Endothelial cell of umbilical vein (primary cell): ENCODE measurements at regions of chr3 and their contacts with region 1.

Region 1: GRCh38 chr3:100893590-100893989 is 99.6 kb downstream of the ABI3BP start:
- DNase-seq: peak; percentile 74
- H3K4me3 ChIP-seq: no peak overlapping the region
- H3K27ac ChIP-seq: no peak overlapping the region
- H3K4me1 ChIP-seq: peaks cover 8% of the 10 kb centered on the region
- H3K27me3 ChIP-seq: no peaks in the 10 kb centered on the region
- CTCF ChIP-seq: peak; percentile 78 to 80
- POLR2A ChIP-seq: no peak

Region 2: GRCh38 chr3:100737334-100737733 is 156.3 kb before region 1 on chr3:
- CTCF ChIA-PET with region 1: interaction called, 4 read pairs
- POLR2A ChIA-PET with region 1: no interaction called
- dilution Hi-C with region 1: no loop called
- intact Hi-C with region 1: loop called (anchors 1 kb)
- DNase-seq: peak; percentile 48
- H3K4me3 ChIP-seq: no peak overlapping the region
- H3K27ac ChIP-seq: no peak overlapping the region
- H3K4me1 ChIP-seq: no peaks in the 10 kb centered on the region
- H3K27me3 ChIP-seq: no peaks in the 10 kb centered on the region
- CTCF ChIP-seq: peak; percentile 19 to 36
- POLR2A ChIP-seq: no peak

Region 3: DNA sequence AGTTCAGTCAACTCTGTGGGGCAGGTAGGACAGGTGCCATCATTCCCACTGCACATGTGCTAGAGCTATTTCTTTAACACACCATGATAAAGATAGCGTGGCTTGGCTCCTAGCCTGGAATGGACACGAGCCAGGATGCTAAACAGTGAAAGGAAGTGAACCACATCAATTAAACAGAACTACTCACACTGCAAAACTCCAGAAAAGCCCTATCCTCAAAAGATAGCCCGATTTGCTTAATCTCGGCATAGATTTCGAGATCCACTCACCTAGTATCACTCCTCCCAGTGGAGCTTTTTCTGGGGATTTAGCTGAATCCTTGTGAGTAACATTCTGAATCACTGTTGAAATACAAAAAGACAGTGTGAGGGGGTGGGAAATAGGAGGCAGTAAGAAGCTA is 18.4 kb before region 1 on chr3:
- CTCF ChIA-PET with region 1: interaction called, 11 read pairs
- POLR2A ChIA-PET with region 1: no interaction called
- dilution Hi-C with region 1: no loop called
- intact Hi-C with region 1: no loop called
- DNase-seq: peak; percentile 94
- H3K4me3 ChIP-seq: no peak overlapping the region
- H3K27ac ChIP-seq: peak overlapping the region; percentile 2
- H3K4me1 ChIP-seq: peaks cover 13% of the 10 kb centered on the region
- H3K27me3 ChIP-seq: no peaks in the 10 kb centered on the region
- CTCF ChIP-seq: no peak
- POLR2A ChIP-seq: no peak

Region 4: DNA sequence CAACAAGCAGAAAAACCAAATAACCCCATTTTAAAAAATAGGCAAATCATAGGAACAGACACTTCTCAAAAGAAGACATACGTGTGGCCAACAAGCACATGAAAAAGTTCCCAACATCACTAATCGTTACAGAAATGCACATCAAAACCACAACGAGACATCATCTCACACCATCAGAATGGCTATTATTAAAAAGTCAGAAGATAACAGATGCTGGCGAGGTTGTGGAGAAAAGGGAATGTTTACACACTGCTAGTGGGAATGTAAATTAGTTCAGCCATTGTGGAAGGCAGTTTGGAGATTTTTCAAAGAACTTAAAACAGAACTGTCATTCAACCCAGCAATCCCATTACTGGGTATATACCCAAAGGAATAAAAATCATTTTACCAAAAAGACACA is 38.9 kb after region 1 on chr3:
- CTCF ChIA-PET with region 1: no interaction called
- POLR2A ChIA-PET with region 1: no interaction called
- dilution Hi-C with region 1: no loop called
- intact Hi-C with region 1: no loop called
- DNase-seq: no peak
- H3K4me3 ChIP-seq: no peak overlapping the region
- H3K27ac ChIP-seq: no peak overlapping the region
- H3K4me1 ChIP-seq: no peaks in the 10 kb centered on the region
- H3K27me3 ChIP-seq: no peaks in the 10 kb centered on the region
- CTCF ChIP-seq: no peak
- POLR2A ChIP-seq: no peak

Region 5: GRCh38 chr3:101069901-101070798 is 176.6 kb after region 1 on chr3:
- CTCF ChIA-PET with region 1: interaction called, 9 read pairs
- POLR2A ChIA-PET with region 1: no interaction called
- dilution Hi-C with region 1: no loop called
- intact Hi-C with region 1: loop called (anchors 1 kb)
- DNase-seq: peak; percentile 46
- H3K4me3 ChIP-seq: no peak overlapping the region
- H3K27ac ChIP-seq: peak overlapping the region; percentile 88
- H3K4me1 ChIP-seq: peaks cover 67% of the 10 kb centered on the region
- H3K27me3 ChIP-seq: no peaks in the 10 kb centered on the region
- CTCF ChIP-seq: peak; percentile 55 to 72
- POLR2A ChIP-seq: no peak

Region 6: DNA sequence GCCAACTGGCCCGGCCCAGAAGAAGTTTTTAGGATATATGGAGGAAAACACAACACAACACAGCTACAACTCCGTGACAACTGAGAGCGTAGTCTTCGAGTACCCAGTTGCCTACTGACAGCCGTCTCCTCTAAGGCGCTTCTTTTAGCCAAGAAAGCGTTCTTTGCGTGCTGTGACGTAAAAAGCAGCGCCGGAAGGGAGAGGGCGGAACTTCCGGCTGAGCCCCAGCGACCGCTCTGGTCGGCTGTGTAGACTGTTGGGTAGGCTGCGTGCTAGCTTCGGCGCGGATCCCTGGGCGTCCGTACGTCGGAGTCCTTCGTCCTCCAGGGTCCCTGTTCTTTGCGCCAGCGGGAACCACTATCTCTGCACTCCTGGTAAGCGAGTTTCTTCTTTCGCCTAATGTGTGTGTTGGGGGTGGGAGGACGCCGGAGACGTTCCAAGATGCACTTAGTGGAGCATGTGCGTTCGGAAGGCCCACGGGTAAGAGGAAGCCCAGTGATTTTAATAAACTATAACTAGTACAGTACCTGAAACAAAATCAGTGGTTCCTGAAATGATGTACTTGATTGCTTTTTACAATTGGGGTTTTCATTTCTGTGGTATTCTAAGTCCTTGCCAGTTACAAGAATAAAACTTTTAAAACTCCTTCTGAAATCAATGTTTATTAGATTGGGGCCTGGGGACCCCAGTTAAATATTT is 668.2 kb after region 1 on chr3 and contains the start of gene TRMT10C:
- CTCF ChIA-PET with region 1: interaction called, 3 read pairs
- POLR2A ChIA-PET with region 1: no interaction called
- dilution Hi-C with region 1: no loop called
- intact Hi-C with region 1: loop called (anchors 10 kb)
- DNase-seq: peak; percentile 95
- H3K4me3 ChIP-seq: peak within 1 kb of the TSS; percentile 97 to 98 (median 98)
- H3K27ac ChIP-seq: peak within 1 kb of the TSS; percentile 89
- H3K4me1 ChIP-seq: peaks cover 10% of the 10 kb centered on the region
- H3K27me3 ChIP-seq: peaks cover 0 to 10% of the 10 kb centered on the region in 2 experiments
- CTCF ChIP-seq: no peak
- POLR2A ChIP-seq: peak; percentile 94
- total RNA-seq, gene TRMT10C: 28.0 and 29.6 TPM in 2 replicates

Region 7: GRCh38 chr3:101695779-101696372 is 802.3 kb after region 1 on chr3:
- CTCF ChIA-PET with region 1: no interaction called
- POLR2A ChIA-PET with region 1: no interaction called
- dilution Hi-C with region 1: no loop called
- intact Hi-C with region 1: loop called (anchors 10 kb)
- DNase-seq: peak; percentile 68
- H3K4me3 ChIP-seq: no peak overlapping the region
- H3K27ac ChIP-seq: no peak overlapping the region
- H3K4me1 ChIP-seq: no peaks in the 10 kb centered on the region
- H3K27me3 ChIP-seq: no peaks in the 10 kb centered on the region
- CTCF ChIP-seq: peak; percentile 50 to 52
- POLR2A ChIP-seq: no peak